ENCODE measurements at regions of chr6 and their contacts with region 1.

Region 1: DNA sequence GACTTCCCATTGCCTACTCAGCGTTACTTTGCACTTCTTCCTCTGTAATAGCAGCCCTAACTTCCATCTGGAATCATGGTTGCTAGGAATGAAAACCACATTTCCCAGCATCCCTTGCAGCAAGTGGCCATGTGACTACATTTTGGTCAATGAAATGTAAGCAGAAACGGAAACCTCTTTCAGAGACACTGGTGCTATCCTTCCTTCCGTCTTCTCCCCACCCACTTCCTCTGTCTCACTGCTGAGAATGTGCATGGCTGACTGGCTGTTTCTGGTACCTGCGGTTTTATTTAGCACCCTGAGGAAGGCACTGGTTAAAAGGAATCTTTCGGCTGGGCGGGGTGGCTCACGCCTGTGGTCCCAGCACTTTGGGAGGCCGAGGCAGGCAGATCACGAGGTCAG is 107.4 kb downstream of the SCML4 start:
- DNase-seq: peak; percentile 93
- H3K4me3 Mint-ChIP-seq: peak overlapping the region; percentile 71
- H3K27ac Mint-ChIP-seq: peak overlapping the region; percentile 85
- H3K4me1 Mint-ChIP-seq: peaks cover 52% of the 10 kb centered on the region
- H3K27me3 Mint-ChIP-seq: no peaks in the 10 kb centered on the region

Region 2: DNA sequence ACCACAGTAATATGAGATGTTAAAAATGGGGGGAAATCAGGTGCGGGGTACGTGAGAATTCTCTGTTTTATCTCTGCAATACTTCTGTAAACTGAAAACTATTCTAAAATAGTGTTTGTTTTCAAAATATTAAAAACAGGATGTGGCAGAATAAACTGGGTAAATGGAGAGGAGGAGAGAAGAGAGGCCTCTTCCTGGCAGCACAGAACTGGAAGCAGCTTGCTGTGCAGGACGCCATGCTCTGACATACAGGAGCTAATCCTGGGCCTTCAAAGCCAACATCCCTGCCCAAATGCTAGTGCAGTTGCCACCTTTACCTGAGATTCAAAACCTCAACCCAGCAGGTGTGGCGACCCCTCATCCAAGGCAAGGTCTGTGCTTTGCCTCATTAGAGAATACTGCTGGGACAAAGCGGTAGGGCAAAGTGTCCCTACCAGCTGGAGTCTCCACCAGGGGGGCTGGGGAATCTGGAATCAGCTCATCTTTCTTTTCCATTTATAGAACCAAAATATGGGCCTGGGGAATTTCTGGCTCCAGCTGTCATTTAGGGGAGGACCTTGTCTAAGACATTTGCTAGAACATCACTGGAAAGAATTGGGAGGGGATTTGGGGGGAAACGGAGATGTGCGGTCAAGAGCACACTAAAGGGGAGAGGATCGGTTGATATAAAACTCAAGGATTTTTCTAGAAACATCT is 40.1 kb after region 1 on chr6:
- intact Hi-C with region 1: loop called (anchors 1 kb)
- DNase-seq: no peak
- H3K4me3 Mint-ChIP-seq: no peak overlapping the region
- H3K27ac Mint-ChIP-seq: no peak overlapping the region
- H3K4me1 Mint-ChIP-seq: peaks cover 31% of the 10 kb centered on the region
- H3K27me3 Mint-ChIP-seq: peaks cover 2% of the 10 kb centered on the region

Region 3: GRCh38 chr6:107847844-107848802 is 131.4 kb after region 1 on chr6:
- intact Hi-C with region 1: loop called (anchors 1 kb)
- DNase-seq: peak; percentile 95
- H3K4me3 Mint-ChIP-seq: peak overlapping the region; percentile 80
- H3K27ac Mint-ChIP-seq: peak overlapping the region; percentile 54
- H3K4me1 Mint-ChIP-seq: peaks cover 21% of the 10 kb centered on the region
- H3K27me3 Mint-ChIP-seq: peaks cover 6% of the 10 kb centered on the region

Region 4: GRCh38 chr6:108020472-108021116 is 303.9 kb after region 1 on chr6:
- intact Hi-C with region 1: no loop called
- DNase-seq: no peak
- H3K4me3 Mint-ChIP-seq: no peak overlapping the region
- H3K27ac Mint-ChIP-seq: no peak overlapping the region
- H3K4me1 Mint-ChIP-seq: no peaks in the 10 kb centered on the region
- H3K27me3 Mint-ChIP-seq: peaks cover 3% of the 10 kb centered on the region